Activated CD4-positive, alpha-beta T cell treated with anti-CD3 and anti-CD28 coated beads, Interleukin-2, amount 10 ng/mL, durations not matched to agents 24 days and 14 days (primary cell): ENCODE measurements at regions of chr22 and their contacts with region 1.

Region 1: DNA sequence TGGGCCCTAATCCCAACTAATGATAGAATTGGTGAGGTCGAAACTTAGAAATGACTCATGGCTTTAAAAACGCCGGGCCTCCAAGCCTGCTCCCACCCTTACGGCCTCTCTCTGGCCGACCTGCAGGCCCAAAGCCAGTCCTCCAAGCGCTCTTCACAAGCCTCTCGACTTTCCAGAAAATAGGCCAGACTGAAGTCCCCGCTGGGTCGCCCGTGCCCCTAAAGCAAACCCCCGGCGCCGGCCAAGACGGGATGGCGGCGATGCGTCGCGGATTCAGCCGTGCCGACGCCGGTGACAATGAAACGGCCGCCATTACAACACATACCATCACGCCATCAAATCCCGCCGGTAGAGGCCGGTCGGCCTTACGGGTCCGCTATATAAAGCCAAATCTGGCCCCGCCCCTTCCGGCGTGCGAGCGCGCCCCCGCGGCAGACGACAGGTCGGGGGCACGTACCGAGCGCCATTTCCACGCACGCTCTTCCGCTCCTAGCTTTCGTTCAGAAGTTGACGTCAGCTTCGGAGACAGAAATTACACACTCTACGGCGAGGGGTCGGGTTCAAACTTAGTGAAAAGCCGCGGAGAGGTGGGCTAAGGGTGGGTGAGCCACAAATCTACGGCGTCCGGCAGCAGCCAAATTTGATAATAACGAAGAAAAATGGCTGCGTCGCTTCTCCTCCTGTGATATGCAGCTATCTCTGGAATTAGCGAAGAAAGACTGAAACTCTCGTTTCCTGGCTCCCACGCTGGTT is at the start of gene RPL3:
- DNase-seq: peak; percentile 99
- H3K4me3 Mint-ChIP-seq: peak within 1 kb of the TSS; percentile 94
- H3K27ac Mint-ChIP-seq: peak within 1 kb of the TSS; percentile 99
- H3K4me1 Mint-ChIP-seq: peaks cover 37% of the 10 kb centered on the region
- H3K27me3 Mint-ChIP-seq: no peaks in the 10 kb centered on the region
- total RNA-seq, gene RPL3: 2,129 and 2,132 TPM in 2 replicates

Region 2: DNA sequence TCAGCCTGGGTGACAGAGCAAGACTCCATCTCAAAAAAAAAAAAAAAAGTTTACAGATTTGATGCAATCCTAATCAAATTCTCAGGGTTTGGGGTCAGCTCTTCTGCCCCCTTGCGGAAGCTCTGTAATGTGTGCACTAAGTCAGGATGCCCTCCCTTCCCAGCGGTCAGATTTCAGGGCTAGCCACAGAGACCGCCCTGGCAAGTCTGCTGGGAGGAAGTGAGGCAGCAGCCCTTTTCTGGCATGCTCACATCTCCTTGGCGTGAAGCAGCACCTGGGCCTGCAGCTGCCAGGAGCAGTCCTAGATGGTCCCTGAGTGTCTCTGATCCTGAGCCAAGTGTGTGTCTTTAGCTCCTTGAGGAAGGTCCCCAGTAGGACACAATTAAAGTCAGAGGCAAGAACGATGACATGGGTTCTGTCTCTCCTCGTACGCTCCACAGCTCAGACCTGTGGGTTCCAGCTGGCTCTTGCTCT is 316.2 kb before region 1 on chr22:
- intact Hi-C with region 1: loop called (anchors 10 kb)
- DNase-seq: peak; percentile 92
- H3K4me3 Mint-ChIP-seq: no peak overlapping the region
- H3K27ac Mint-ChIP-seq: peak overlapping the region; percentile 69
- H3K4me1 Mint-ChIP-seq: peaks cover 9% of the 10 kb centered on the region
- H3K27me3 Mint-ChIP-seq: peaks cover 13% of the 10 kb centered on the region

Region 3: DNA sequence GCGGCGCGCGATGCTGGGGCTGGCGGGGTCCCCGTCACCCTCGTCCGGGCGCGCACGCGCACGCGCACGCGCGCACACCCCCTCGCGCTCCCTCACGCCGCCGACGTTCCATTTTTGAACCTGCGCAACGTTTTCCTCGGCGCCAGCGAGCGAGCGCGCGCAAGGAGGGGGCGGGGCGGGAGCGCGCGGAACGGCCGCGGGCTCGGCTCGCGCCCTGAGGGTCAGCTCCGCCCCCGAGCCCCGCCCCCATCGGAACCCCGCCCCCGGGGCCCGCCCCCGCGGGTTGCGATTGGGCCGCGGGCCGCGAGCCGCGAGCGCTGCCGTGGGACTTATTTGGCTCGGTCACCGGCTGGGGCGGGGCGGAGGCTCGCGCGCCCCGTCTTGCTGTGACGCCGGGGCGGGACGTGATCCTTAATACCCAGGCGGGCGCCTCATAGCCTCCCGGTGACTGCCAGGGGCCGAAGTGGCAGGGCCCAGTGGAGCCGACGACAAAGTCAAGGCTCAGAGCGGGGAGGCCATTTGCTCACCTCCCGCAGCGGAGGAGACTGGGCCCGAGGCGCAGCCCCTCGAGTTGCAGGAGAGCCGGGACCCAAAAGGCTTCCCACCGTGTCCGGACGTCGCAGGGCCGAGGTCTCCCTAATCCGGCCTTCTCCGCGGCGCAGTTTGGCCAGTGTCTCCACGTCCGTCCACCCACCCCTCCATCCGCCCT is 166.8 kb before region 1 on chr22 and contains the start of gene CBX7:
- intact Hi-C with region 1: loop called (anchors 1 kb)
- DNase-seq: peak; percentile 98
- H3K4me3 Mint-ChIP-seq: peak within 1 kb of the TSS; percentile 92
- H3K27ac Mint-ChIP-seq: peak within 1 kb of the TSS; percentile 83
- H3K4me1 Mint-ChIP-seq: peaks cover 32% of the 10 kb centered on the region
- H3K27me3 Mint-ChIP-seq: peaks cover 29% of the 10 kb centered on the region
- total RNA-seq, gene CBX7: 10.8 and 11.6 TPM in 2 replicates

Region 4: DNA sequence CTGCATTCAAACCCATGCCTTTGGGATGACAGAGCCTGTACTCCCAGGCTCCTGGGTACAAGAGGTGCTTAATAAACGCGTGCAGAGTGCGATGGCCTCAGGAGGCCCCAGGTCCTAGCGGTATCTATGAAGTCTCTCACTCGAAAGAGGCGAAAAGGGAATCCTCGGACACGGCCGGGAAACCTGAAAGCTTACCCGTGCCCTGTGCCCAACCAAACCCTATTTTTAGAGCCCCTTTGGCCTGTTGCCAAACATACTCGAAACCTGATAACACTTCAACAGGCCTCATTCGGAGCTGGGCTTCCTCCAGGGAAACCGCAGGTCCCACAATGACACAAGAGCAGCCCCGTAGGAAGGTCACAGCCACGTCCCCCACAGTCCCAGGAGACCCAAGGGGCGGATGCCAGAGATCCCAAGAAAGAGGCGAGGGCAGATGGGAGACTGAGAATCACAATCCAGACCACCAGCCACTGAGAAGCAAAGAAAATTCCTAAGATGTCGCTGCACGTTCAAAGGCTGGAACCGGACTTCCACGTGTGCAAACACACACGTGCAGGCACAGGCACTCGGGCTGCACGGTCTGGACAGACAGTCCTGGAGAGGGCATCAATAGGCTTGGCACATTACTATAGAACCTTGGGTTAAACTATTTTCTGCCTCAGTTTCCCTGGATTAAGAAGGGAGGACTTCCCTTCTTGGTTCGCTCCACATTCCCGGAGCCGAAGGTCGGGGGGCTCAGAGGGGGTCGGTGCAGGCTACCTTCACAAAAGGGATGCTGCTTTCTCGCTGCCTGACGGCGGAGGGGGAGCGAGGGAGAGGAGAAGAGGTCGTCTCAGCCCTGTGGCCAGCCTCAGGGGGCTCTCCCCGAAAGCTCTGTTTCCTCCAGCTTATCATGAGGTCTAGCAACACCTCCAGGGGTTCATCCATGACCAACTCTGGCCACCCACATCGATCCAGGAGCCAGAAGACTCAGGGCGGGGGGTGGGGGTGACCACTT is 82.8 kb before region 1 on chr22:
- intact Hi-C with region 1: loop called (anchors 5 kb)
- DNase-seq: peak; percentile 79
- H3K4me3 Mint-ChIP-seq: peak overlapping the region; percentile 49
- H3K27ac Mint-ChIP-seq: no peak overlapping the region
- H3K4me1 Mint-ChIP-seq: peaks cover 43% of the 10 kb centered on the region
- H3K27me3 Mint-ChIP-seq: peaks cover 60% of the 10 kb centered on the region

Region 5: DNA sequence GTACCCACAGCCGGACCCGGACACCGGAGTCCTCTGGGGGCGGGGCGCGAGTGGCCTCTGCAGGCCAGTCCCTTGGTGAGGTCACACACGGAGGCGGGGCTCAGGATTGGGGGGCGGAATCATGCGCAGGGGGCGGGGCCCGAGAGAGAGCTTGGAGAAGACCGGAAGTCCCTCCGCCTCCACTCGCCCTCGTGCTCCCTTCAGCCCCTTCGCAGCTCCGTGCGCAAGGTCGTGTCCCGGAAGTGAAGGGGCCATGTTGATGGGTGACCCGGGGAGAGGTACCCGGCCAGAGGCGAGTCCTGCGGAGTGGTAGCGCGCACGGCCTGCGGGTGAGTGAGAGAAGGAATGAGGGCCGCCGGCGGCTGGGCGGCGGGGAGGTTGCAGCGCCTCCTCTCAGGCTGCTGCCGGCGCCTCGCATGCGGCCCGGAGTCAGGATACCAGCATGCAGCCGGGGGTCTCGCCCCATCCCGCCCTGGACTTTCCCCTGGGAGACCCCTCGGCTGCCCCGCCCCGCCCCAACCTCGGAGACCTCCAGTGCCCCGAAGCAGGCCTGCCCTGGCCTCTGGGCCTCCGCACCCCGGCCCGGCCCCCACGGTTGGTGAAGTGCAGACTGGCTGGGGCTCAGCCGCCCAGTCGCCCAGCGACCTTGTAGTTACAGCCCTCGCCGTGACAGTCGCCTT is 182.8 kb after region 1 on chr22 and contains the start of gene MIEF1:
- intact Hi-C with region 1: loop called (anchors 5 kb)
- DNase-seq: peak; percentile 97
- H3K4me3 Mint-ChIP-seq: peak within 1 kb of the TSS; percentile 100
- H3K27ac Mint-ChIP-seq: peak within 1 kb of the TSS; percentile 98
- H3K4me1 Mint-ChIP-seq: peaks cover 25% of the 10 kb centered on the region
- H3K27me3 Mint-ChIP-seq: peaks cover 3% of the 10 kb centered on the region
- total RNA-seq, gene MIEF1: 53.7 and 54.8 TPM in 2 replicates

Region 6: GRCh38 chr22:39520054-39520891 is 200.8 kb after region 1 on chr22 and contains the start of gene ATF4:
- intact Hi-C with region 1: loop called (anchors 1 kb)
- DNase-seq: peak; percentile 99
- H3K4me3 Mint-ChIP-seq: peak within 1 kb of the TSS; percentile 93
- H3K27ac Mint-ChIP-seq: peak within 1 kb of the TSS; percentile 98
- H3K4me1 Mint-ChIP-seq: peaks cover 50% of the 10 kb centered on the region
- H3K27me3 Mint-ChIP-seq: peaks cover 2% of the 10 kb centered on the region
- total RNA-seq, gene ATF4: 392 and 393 TPM in 2 replicates